ENCODE measurements at regions of chr7 and their contacts with region 1.

Region 1: GRCh38 chr7:159143780-159144757 is 598 bp downstream of the VIPR2 start:
- DNase-seq: peak; percentile 26 to 66
- ATAC-seq: peak; percentile 38 to 73 (median 48)
- H3K4me3 ChIP-seq: peak overlapping the region; percentile 76
- H3K27ac ChIP-seq: no peak overlapping the region
- H3K4me1 ChIP-seq: peaks cover 5% of the 10 kb centered on the region
- H3K27me3 ChIP-seq: peaks cover 0 to 29% (median 5%) of the 10 kb centered on the region in 3 donors
- CTCF ChIP-seq: no peak

Region 2: GRCh38 chr7:159030490-159031134 is 113.5 kb before region 1 on chr7:
- intact Hi-C with region 1: loop called (anchors 5 to 10 kb)
- DNase-seq: peak; percentile 60 to 84
- ATAC-seq: peak; percentile 74 to 93 (median 82)
- H3K4me3 ChIP-seq: peak overlapping the region; percentile 76
- H3K27ac ChIP-seq: peak overlapping the region; percentile 72
- H3K4me1 ChIP-seq: no peaks in the 10 kb centered on the region
- H3K27me3 ChIP-seq: peaks cover 0 to 2% (median 0%) of the 10 kb centered on the region in 3 donors
- CTCF ChIP-seq: peak; percentile 46

Region 3: GRCh38 chr7:159105845-159106614 is 38.0 kb before region 1 on chr7:
- intact Hi-C with region 1: loop called in 1 of 2 experiments (anchors 5 kb)
- DNase-seq: peak; percentile 7 to 52
- ATAC-seq: peak; percentile 45 to 82 (median 76)
- H3K4me3 ChIP-seq: no peak overlapping the region
- H3K27ac ChIP-seq: peak overlapping the region; percentile 53
- H3K4me1 ChIP-seq: peaks cover 14% of the 10 kb centered on the region
- H3K27me3 ChIP-seq: no peaks in the 10 kb centered on the region
- CTCF ChIP-seq: no peak